HEK293 (cell line): ENCODE measurements at regions of chr14 and their contacts with region 1.

Region 1: GRCh38 chr14:67599698-67600561 is at the start of gene PIGH:
- H3K4me3 ChIP-seq: peak within 1 kb of the TSS; percentile 95
- H3K27ac ChIP-seq: peak within 1 kb of the TSS; percentile 76
- H3K4me1 ChIP-seq: no peaks in the 10 kb centered on the region
- CTCF ChIP-seq: peak; percentile 95

Region 2: DNA sequence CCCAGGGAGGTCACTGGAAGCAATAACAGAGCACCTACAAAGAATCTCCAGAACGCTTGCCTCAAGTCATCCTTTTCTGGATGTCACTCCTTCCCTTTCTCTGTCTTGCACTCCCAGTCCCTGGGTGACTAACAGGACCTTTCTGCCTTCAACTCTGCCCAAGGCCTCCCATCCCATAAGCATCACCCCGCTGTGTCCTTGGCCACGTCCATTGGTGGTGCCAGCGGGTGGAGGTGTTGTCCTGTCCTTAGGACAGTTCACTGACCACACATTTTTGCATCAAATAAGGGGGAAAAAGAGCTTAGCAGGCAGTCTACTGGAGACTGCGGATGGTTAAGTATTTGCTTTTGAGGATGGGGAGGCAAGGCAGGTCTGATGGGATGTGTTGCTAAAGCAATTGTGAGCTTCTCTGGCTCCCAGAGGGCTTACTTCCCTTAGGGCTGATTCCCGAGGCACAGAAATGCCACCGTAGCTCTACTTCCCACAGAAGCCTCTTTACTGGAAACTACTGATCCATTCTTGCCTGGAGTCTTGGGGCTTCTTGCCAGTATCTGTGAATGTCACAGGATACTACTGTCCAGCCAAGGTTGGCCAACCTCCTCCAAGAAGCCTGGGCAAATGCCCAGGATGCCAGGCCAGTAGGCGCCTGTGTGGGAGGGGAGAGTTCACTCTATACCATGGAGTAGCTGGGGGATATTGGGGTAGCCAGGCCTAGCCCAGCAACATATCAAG is 164.1 kb before region 1 on chr14:
- CTCF ChIA-PET with region 1: no interaction called
- POLR2A ChIA-PET with region 1: no interaction called
- H3K4me3 ChIP-seq: no peak overlapping the region
- H3K27ac ChIP-seq: no peak overlapping the region
- H3K4me1 ChIP-seq: no peaks in the 10 kb centered on the region
- CTCF ChIP-seq: no peak

Region 3: DNA sequence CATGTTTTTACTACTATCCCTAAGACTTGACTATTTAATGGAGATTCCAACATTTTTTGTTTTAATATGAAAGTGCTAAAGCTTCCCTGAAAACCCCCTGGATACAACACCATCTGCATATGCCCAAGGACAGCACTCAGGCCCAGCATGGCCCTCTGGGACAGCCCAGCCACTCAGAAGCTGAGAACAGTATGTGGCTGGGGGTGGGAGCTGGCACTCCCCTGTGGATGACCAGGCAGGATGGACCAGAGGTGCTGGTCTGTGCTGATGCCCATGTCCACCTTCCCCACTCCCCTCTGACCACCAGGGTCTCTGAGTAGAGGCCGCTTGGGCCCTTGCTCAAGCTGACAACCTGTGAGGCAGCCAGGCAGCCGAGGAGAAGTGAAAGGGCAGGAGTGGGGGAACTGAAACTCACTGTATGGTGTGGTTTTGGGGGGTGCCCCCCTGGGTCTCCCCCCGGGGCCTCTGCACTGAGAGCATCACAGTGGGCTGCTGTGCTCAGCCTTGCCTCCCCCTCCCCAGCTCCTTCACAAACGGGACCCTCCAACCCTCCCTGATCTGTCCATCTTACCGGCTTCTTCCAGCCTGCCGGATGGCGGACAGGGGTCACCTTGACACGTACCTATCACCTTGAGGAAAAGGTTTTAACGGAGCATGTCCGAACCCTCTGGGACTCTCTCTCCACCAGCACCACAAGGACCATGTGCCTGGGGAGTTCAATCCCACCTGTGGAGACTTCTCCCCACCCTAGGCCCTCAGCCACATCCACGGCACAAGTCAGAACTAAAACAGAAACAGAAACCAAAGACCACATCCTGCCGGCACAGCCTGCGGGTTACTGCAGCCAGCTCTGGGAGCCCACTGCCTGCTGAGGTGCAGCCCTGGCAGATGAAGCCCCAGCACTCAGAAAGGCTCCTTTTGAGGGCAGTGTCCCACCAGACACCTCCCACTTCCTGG is 111.7 kb before region 1 on chr14 and contains the start of gene TMEM229B:
- CTCF ChIA-PET with region 1: no interaction called
- POLR2A ChIA-PET with region 1: no interaction called
- H3K4me3 ChIP-seq: no peak within 1 kb of the TSS
- H3K27ac ChIP-seq: no peak within 1 kb of the TSS
- H3K4me1 ChIP-seq: no peaks in the 10 kb centered on the region
- CTCF ChIP-seq: no peak

Region 4: DNA sequence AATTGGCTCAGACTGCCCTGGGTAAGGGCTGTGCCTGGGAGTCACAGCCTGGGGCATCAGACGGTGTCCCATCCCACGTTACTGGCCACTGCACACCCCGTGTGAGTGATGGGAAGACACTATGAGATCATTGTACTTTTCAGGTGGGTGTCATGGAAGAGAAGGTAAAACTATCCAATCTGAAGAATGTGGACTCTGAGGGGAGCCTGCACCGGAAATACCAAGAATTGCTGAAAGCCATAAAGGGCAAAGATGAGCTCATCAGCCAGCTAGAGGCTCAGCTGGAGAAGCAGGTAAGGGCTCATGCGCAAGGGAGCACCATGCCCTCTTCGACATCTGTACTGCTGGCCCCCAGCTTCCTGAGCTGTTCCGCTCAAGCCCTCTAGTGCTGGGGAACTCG is 42.8 kb before region 1 on chr14:
- CTCF ChIA-PET with region 1: no interaction called
- POLR2A ChIA-PET with region 1: interaction called, 10 read pairs
- H3K4me3 ChIP-seq: no peak overlapping the region
- H3K27ac ChIP-seq: no peak overlapping the region
- H3K4me1 ChIP-seq: no peaks in the 10 kb centered on the region; the same call in 1 of the 2 replicates
- CTCF ChIP-seq: no peak

Region 5: DNA sequence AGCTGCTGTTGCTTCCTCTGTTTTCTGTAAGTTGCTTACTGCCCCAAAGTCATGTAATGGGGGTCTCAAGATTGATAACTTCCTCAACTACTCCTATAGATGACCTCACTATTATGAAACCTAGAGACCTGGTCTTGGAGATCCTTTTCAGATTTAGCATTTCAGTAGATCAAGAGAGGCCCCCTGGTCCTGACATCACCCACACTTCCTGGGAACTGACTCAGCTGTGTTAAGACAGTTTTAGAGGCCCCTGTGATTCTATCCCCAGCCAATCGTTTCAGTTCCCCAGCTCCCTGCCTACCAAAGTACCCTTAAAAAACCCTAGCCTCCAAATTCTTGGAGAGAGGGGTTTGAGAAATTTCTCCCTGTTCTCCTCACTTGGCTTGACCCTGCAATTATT is 10.6 kb after region 1 on chr14:
- CTCF ChIA-PET with region 1: interaction called, 15 read pairs
- POLR2A ChIA-PET with region 1: interaction called, 8 read pairs
- H3K4me3 ChIP-seq: no peak overlapping the region
- H3K27ac ChIP-seq: no peak overlapping the region
- H3K4me1 ChIP-seq: no peaks in the 10 kb centered on the region
- CTCF ChIP-seq: no peak

Region 6: DNA sequence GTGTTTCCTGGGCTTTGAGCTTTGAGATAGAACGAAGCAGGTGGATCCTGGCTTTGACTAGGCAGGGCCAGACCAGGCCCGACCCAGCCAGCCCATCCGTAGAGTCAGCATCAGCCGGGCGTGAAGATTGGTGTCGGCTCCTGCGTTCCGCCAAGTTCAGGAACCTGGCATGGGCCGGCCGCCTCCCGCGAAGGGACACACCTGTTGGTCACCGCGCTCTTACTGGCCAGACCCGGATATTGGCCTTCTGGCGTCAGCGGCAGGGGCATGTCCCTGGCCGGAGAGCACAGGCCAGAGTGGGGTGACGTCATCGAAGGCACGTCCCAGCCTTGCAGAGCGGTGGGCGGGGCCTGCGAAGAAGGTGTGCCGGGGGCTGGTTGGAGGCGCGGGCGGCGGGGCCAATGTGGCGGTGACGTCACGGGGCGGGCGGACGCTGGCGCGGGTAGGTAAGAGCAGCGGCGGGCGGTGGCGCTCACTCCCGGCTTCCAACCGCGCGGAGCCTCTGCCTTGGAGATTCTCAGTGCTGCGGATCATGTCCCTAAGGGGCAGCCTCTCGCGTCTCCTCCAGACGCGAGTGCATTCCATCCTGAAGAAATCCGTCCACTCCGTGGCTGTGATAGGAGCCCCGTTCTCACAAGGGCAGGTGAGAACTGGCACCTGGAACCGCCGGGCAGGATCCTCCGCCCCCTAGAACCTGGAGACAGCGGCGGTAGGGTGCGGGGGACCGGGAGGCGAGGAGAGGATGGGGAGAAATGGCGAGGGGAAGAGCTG is 19.7 kb after region 1 on chr14 and contains the start of gene ARG2:
- CTCF ChIA-PET with region 1: interaction called, 10 read pairs
- POLR2A ChIA-PET with region 1: interaction called, 8 read pairs
- H3K4me3 ChIP-seq: peak within 1 kb of the TSS; percentile 80
- H3K27ac ChIP-seq: peak within 1 kb of the TSS; percentile 38; the same call in 1 of the 2 replicates
- H3K4me1 ChIP-seq: peaks cover 13% of the 10 kb centered on the region
- CTCF ChIP-seq: peak; percentile 56; the same call in 1 of the 2 replicates

Region 7: DNA sequence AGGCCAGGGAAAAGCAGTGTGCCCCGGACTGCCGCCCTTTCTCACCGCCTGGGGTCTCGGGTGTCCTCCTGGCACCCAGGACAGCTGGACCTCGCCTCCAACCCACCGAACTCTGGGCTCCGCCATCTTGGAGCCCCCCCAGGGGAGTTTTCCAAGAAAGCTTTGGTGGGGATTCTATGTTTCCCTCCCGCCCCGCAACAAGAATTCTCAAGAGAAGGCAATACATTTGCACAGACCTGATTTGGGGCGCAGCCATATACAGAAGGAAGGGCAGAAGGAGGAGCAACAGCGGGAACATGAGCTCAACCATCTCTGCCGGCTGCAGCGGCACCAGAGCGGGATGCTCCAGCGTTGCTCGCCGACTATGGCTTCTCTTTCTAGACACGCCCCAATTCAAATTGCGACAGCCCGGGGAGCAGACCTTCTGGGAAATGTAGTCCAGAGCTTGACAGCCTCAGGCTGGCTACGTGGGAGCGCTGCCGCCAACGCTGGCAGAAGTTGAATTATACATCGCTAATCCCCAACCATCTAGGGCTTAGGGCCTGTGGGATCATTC is 95.5 kb after region 1 on chr14 and contains the start of gene RDH11:
- CTCF ChIA-PET with region 1: no interaction called
- POLR2A ChIA-PET with region 1: interaction called, 14 read pairs
- H3K4me3 ChIP-seq: peak within 1 kb of the TSS; percentile 89
- H3K27ac ChIP-seq: peak within 1 kb of the TSS; percentile 64
- H3K4me1 ChIP-seq: peaks cover 5% of the 10 kb centered on the region; the same call in 1 of the 2 replicates
- CTCF ChIP-seq: no peak